Posterior vena cava (tissue), 2 donors: ENCODE measurements at regions of chr5 and their contacts with region 1.

Region 1: GRCh38 chr5:8376478-8376877 is 507.5 kb downstream of the MTRR start:
- DNase-seq: no peak

Region 2: DNA sequence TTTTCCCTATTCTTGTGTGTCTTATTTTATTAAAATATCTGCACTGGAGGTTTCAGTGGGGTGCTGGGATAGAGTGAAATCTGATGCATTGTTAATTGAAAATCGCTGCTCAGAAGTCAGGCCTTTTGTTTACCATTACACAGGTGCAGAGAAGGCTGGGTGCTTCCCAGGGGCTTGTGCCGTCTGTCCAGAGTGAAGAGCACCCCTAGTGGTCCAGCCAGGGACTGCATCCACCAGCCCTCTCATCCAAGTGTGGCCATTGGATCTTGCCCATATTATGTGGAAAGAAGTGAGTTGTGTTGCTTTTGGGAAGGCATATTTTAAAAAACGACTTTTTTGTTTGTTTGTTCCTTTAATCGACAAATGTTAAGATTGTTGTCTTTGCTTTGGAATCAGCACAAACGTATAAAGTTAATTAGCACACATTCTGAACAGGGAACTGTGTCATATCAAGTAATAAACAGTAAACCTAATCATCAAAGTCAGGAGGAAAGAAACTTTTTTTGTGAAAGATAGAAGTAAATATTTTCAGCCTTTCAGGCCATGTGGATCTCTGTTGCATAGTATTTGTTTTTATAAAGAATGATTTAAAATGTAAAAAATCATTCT is 191.9 kb before region 1 on chr5:
- intact Hi-C with region 1: no loop called
- DNase-seq: peak; percentile 83

Region 3: DNA sequence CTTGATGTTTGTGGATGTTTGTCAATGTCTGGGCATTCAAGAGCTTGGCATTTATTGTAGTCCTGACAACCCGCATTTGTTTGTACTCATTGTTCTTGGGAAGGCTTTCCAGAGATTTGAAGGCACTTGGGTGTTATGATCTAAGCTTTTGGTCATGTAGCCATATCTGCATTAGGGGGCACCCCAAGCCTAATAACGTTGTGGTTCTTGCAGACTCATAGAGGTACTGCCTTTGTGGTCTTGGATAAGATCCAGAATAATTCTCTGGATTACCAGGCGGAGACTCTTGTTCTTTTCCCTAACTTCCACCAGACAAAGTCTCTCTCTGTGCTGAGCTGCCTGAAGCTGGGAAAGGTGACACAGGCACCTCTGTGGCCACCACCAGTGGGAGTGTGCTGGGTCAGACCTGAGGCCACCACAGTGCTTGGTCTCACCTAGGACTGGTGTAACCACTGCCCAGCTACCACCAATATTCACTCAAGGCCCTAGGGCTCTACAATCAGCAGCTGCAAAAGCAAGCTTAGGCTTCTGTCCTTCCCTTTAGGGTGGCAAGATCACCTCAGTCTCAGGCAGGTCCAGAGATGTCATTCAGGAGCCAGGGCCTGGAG is 1398.1 kb after region 1 on chr5:
- intact Hi-C with region 1: loop called in 1 of 2 experiments (anchors 10 kb)
- DNase-seq: no peak

Region 4: GRCh38 chr5:10145923-10146401 is 1769.5 kb after region 1 on chr5:
- intact Hi-C with region 1: no loop called
- DNase-seq: no peak